ENCODE measurements at regions of chr12 and their contacts with region 1.

Region 1: GRCh38 chr12:24212496-24212895 is 263.0 kb upstream of the SOX5 start:
- DNase-seq: no peak
- ATAC-seq: no peak
- H3K4me3 ChIP-seq: no peak overlapping the region
- H3K27ac ChIP-seq: no peak overlapping the region
- H3K4me1 ChIP-seq: no peaks in the 10 kb centered on the region
- H3K27me3 ChIP-seq: no peaks in the 10 kb centered on the region
- CTCF ChIP-seq: no peak

Region 2: GRCh38 chr12:24414480-24414879 is 202.0 kb after region 1 on chr12:
- intact Hi-C with region 1: loop called in 1 of 10 experiments (anchors 10 kb)
- DNase-seq: no peak
- ATAC-seq: no peak
- H3K4me3 ChIP-seq: no peak overlapping the region
- H3K27ac ChIP-seq: no peak overlapping the region
- H3K4me1 ChIP-seq: no peaks in the 10 kb centered on the region
- H3K27me3 ChIP-seq: no peaks in the 10 kb centered on the region
- CTCF ChIP-seq: no peak